ENCODE measurements at regions of chr12 and their contacts with region 1.

Region 1: GRCh38 chr12:47207340-47207717 is 127.6 kb upstream of the AMIGO2 start:
- DNase-seq: peak; percentile 34 to 60 (median 50)
- H3K4me3 ChIP-seq: peak overlapping the region; percentile 44
- H3K4me3 Mint-ChIP-seq: peak overlapping the region; percentile 58 to 95 (median 78)
- H3K27ac ChIP-seq: peak overlapping the region; percentile 21
- H3K27ac Mint-ChIP-seq: peak overlapping the region; percentile 86 to 98 (median 94)
- H3K4me1 ChIP-seq: peaks cover 67% of the 10 kb centered on the region
- H3K4me1 Mint-ChIP-seq: peaks cover 77 to 90% (median 84%) of the 10 kb centered on the region in 3 donors
- H3K27me3 ChIP-seq: no peaks in the 10 kb centered on the region
- H3K27me3 Mint-ChIP-seq: peaks cover 0 to 2% of the 10 kb centered on the region in 2 donors

Region 2: DNA sequence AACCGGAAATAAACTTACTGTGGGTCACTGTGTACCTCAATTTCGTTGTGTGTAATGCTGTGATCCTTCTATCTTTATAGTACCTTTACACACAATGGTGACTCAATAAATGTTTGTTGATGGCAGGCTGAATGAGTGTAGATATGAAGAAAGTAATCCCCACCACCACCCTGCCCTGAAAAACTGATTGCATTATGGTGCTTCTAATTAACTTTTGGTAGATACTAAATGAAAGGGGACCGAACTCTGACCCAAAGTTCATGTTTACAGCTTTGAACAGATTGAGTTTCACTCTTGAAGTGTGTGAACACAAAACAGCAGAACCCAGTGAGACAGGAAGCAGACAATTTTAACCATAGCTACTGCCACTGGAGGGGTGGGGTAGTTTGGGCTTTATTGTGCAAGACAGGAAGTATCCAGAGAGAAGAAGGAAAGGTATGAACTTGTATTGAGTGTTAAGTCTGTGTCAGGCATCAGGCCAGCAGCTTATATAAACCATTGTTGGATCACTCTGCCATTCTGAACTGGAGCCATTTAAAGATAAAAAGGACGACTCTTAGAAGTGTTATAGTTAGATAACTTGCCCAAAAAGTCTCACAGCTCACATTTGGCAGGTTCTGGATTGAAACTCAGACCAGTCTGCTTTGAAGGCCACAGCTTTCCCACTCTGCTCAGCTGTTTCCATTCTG is 69.4 kb after region 1 on chr12:
- CTCF ChIA-PET with region 1: no interaction called
- POLR2A ChIA-PET with region 1: interaction called, 11 read pairs
- DNase-seq: peak; percentile 30 to 82 (median 81)
- H3K4me3 ChIP-seq: peak overlapping the region; percentile 37
- H3K4me3 Mint-ChIP-seq: peak overlapping the region; percentile 11 to 79 (median 72)
- H3K27ac ChIP-seq: peak overlapping the region; percentile 62
- H3K27ac Mint-ChIP-seq: peak overlapping the region; percentile 87 to 96 (median 92)
- H3K4me1 ChIP-seq: peaks cover 61% of the 10 kb centered on the region
- H3K4me1 Mint-ChIP-seq: peaks cover 38 to 62% (median 57%) of the 10 kb centered on the region in 3 donors
- H3K27me3 ChIP-seq: no peaks in the 10 kb centered on the region
- H3K27me3 Mint-ChIP-seq: no peaks in the 10 kb centered on the region

Region 3: GRCh38 chr12:47449797-47450196 is 242.5 kb after region 1 on chr12:
- CTCF ChIA-PET with region 1: no interaction called
- POLR2A ChIA-PET with region 1: no interaction called
- DNase-seq: no peak
- H3K4me3 ChIP-seq: no peak overlapping the region
- H3K4me3 Mint-ChIP-seq: no peak overlapping the region
- H3K27ac ChIP-seq: no peak overlapping the region
- H3K27ac Mint-ChIP-seq: no peak overlapping the region
- H3K4me1 ChIP-seq: no peaks in the 10 kb centered on the region
- H3K4me1 Mint-ChIP-seq: no peaks in the 10 kb centered on the region
- H3K27me3 ChIP-seq: no peaks in the 10 kb centered on the region
- H3K27me3 Mint-ChIP-seq: peaks cover 10 to 32% of the 10 kb centered on the region in 2 donors